Activated naive CD4-positive, alpha-beta T cell treated with anti-CD3 and anti-CD28 coated beads for 36 hours (primary cell): ENCODE measurements at regions of chr11 and their contacts with region 1.

Region 1: DNA sequence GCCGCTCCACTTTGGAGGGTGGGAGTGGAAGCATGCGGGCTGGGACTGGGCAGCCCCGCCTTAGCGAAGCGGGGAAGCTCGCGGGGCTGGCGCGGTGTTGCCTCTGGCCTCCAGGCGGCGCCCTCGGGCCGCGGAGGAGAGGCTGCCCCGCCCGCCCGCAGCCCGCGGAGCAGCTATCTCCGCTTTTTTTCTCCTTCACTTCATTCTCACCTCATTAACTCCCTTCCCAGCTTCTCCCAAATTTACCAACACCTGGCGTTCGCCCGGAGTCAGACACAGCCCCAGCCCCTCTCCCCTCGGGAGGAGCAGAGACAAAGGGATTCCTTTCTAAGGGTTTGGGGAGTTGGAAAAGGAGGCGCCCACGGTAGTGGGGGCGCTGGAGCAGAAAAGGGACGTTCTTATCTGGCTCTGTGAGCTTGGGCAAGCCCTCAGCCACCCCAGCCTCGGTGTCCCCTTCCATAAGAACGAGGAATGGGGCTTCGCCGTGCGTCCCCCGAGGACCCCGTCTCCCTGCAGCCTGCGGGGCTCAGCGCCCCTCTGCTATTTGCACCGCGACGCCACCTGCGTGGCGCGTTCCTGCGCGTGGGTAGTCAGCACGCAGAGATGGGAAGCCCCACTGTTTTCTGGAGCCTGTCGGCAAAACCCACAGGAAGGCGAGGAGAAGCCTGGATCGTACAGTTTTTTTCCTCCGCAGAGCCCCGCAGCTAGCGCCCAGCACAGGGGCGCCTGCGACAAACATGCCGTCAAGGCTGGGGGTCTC is 1.5 kb upstream of the WNT11 start:
- DNase-seq: peak; percentile 77
- H3K4me3 Mint-ChIP-seq: peak overlapping the region; percentile 68
- H3K27ac Mint-ChIP-seq: no peak overlapping the region
- H3K4me1 Mint-ChIP-seq: peaks cover 12% of the 10 kb centered on the region
- H3K27me3 Mint-ChIP-seq: peaks cover 61% of the 10 kb centered on the region

Region 2: DNA sequence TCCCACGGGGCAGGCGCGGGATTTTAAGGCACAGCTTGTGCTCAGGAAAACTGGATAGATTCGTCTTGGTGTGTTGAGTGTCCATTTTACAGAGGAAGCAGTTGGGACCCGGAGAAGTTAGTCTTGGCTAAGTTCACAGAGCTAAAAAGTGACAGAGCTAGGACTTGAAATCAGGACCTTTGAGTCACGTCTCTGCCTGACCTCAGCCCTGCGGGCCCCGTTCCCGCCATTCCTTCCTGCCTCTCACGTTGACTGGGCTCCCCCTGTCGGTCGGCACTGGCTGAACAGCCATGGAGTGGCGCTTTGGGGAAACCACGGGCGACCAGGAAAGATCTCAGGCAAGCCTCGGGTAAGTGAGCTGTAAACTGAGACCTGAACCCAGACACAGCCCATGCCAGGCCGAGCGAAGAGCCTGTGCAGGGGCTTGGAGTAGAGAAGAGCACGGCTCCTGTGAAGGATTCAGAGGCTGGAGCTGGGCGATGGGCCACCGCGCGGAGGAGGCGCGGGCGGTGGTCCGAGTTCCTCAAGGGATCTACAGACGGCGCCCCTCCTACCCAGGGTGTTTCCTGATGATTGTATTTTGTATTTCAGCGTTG is 55.6 kb before region 1 on chr11:
- CTCF ChIA-PET with region 1: interaction called, 10 read pairs
- intact Hi-C with region 1: no loop called
- DNase-seq: peak; percentile 96
- H3K4me3 Mint-ChIP-seq: peak overlapping the region; percentile 63
- H3K27ac Mint-ChIP-seq: peak overlapping the region; percentile 57
- H3K4me1 Mint-ChIP-seq: peaks cover 16% of the 10 kb centered on the region
- H3K27me3 Mint-ChIP-seq: peaks cover 22% of the 10 kb centered on the region

Region 3: DNA sequence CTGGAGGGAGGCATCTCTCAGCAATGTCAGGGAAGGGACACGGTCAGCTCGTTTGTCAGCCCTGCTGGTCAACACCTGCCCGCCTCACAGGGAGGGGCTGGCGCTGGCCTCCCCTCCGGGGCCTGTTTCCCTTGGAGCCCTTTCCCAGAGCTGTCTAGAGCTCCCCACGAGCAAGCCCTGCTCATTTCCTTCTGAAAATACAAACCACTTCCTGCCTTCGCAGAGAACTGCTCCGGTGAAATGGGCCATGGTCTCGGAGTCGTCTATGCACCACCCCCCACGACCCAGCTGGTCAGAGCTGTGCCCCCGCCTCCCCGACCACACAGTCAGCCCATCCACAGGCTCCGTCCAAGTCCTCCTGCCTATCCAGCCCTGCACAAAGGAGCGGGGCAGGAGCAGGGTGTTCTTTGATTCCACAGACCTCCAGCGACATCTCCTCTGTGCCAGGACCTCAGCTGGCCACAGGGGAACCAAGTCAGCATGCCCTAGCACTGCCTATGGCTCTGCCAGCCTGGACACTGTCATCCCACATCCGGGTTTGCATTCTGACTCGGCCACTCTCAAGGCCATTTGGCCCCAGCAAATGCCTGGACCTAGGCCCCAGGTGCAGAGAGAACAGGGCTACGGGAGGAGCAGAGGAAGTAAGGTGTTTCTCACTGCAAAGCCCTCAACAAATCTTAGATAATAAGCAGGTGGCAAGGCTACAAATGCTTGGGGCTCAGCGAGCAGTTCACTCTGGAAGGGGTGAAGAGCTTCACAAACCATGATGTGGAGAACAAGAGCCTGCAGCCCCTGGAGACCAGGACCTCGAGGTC is 80.6 kb after region 1 on chr11:
- CTCF ChIA-PET with region 1: interaction called, 34 read pairs
- intact Hi-C with region 1: no loop called
- DNase-seq: peak; percentile 43
- H3K4me3 Mint-ChIP-seq: no peak overlapping the region
- H3K27ac Mint-ChIP-seq: peak overlapping the region; percentile 66
- H3K4me1 Mint-ChIP-seq: peaks cover 30% of the 10 kb centered on the region
- H3K27me3 Mint-ChIP-seq: no peaks in the 10 kb centered on the region

Region 4: DNA sequence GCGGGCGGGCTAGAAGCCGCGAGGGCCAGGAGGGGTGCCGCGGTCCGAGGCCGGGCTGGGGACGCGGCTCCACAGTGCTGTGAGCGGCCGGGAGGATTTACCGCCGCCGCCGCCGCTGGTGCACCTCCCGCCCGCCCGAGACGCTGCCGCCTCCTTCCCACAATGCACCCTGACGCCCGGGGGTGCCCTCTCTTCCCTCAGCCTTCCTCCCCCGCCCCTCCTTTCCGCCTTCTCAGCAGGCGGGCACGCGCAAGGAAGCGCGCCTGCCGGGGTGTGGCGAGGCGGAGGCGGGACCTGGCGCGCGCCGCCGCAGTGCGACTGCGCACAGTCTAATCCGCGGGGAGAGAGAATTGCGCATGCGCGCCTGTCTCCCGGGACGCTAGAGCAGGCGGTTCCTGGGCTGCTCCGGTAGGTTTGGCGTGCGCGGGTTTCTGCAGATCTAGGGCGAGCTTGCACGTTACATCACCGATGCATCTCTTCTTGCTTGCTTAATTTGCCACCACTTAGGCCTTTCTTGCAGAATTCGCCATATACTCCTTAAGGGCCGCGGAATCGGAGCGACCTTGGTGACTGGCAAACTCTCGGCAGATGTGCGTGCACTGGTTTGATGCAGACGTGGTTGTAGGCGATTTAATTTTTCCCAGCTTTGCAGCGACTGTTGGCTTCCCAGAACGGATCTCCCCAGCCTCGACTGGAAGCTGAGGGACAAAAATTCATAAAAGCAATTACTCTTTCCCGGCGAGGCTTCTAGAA is 173.3 kb after region 1 on chr11 and contains the starts of genes GVQW3 and THAP12:
- CTCF ChIA-PET with region 1: interaction called, 3 read pairs
- intact Hi-C with region 1: loop called (anchors 1 kb)
- DNase-seq: peak; percentile 97
- H3K4me3 Mint-ChIP-seq: peak within 1 kb of the TSS; percentile 91
- H3K27ac Mint-ChIP-seq: peak within 1 kb of the TSS; percentile 91
- H3K4me1 Mint-ChIP-seq: peaks cover 58% of the 10 kb centered on the region
- H3K27me3 Mint-ChIP-seq: no peaks in the 10 kb centered on the region
- total RNA-seq, gene GVQW3: 1.7 to 2.1 TPM
- total RNA-seq, gene THAP12: 39.4 to 40.6 TPM

Region 5: DNA sequence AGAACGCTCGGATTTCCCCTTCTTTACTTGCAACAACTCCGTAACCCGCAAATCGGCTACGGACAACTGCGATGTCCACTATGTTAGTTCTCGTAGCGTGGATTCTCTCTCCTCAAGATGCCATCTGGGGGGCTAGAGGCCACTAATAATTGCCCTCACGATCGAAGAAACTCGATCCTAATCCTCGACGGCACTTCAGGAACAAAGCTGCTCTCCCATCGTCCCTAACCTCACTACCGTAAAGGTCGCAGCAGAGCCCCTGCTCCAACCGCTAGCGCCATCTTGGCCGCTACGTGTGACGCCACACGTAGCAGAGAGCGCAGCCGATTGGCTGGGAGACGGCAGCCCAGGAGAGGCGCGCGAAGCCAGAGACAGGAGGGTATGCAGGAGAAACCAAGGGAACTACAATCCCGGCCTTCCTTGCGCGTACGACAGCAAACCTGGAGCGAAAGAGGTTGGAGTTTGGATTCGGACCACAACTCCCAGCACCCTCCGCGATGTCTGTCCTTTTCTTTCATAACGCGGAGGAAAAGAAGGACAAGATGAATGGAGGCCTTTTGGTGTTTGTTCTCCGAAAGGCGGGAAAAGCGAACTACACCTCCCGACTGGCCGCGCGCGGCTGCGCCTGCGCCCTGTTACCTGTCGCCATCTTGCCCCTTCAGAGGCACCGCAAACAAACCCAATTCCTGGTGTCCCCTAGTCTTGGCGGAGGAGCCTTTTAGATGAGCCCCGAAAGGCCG is 236.7 kb after region 1 on chr11 and contains the start of gene EMSY:
- CTCF ChIA-PET with region 1: interaction called, 4 read pairs
- intact Hi-C with region 1: loop called (anchors 2 kb)
- DNase-seq: peak; percentile 95
- H3K4me3 Mint-ChIP-seq: peak within 1 kb of the TSS; percentile 95
- H3K27ac Mint-ChIP-seq: peak within 1 kb of the TSS; percentile 96
- H3K4me1 Mint-ChIP-seq: peaks cover 32% of the 10 kb centered on the region
- H3K27me3 Mint-ChIP-seq: no peaks in the 10 kb centered on the region
- total RNA-seq, gene EMSY: 23.2 to 26.7 TPM

Region 6: DNA sequence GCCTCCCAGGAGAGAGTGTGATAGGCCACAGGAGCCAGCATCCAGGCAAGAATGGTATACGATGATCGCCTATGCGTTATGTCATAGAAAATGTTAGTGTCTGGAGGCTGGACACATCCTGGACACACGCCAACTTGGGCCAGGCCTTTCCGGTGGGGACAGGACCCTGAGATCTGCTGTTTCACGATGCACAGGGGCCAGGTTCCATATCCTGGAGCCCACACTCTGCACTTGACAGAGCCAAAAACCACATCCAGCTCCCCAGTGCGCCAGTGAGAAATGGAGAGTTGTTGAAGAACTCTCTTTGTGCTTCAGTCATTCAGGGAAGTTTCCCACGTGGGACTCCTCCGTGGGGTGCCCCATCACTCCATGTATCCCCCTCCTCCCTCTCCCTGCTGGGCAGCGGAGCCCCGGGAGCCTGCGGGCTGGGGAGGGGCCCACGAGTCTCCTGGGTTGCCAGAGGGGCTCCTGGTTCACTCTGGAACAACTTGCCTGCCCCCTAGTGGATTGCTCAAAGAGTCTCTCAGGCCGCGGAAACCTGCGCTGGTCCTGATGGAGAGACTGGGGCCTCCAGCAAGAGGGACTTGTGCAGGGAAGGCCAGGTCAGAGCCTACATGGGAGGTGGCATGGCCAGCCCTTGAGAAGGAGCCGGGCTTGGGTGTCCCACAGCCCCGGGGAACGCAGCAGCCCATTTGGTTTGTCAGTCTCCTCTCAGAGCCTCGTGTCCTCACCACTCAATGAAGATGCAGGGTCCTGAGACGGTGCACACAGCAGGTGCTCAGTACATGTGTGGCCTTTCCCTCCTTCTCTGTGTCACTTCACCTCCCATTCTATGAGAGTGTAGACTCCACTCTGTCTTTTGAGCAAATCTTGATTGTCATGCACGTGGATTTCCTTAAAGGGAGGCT is 472.9 kb after region 1 on chr11:
- CTCF ChIA-PET with region 1: interaction called, 10 read pairs
- intact Hi-C with region 1: loop called (anchors 2 kb)
- DNase-seq: peak; percentile 80
- H3K4me3 Mint-ChIP-seq: no peak overlapping the region
- H3K27ac Mint-ChIP-seq: no peak overlapping the region
- H3K4me1 Mint-ChIP-seq: peaks cover 2% of the 10 kb centered on the region
- H3K27me3 Mint-ChIP-seq: peaks cover 5% of the 10 kb centered on the region